ENCODE measurements at regions of chr2 and their contacts with region 1.

Region 1: DNA sequence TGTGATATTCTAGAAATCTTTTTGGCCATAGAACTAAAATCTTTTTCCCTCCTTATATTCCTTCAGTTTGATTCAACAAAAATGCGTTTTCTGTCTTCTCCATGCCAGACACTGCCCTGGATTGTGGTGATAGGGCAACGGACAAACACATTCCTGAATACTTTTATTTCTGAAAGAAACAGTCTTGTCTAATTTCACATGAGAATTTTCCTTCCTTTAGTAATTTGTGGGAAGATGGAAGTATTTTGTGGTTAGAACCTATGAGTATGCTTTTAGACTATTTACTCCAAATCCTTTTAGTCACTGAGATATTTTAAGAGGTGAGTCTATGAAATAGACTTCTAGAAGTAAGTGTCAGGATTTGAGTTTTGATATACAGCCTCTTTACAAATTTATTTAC is 49.6 kb downstream of the COL5A2 start:
- DNase-seq: no peak

Region 2: GRCh38 chr2:189179570-189179950 is 49.6 kb after region 1 on chr2 and contains the start of gene COL5A2:
- intact Hi-C with region 1: loop called in 1 of 2 experiments (anchors 10 kb)
- DNase-seq: peak; percentile 77
- total RNA-seq, gene COL5A2: 61.1 to 123 TPM

Region 3: GRCh38 chr2:189287982-189288521 is 158.1 kb after region 1 on chr2:
- intact Hi-C with region 1: loop called in 1 of 2 experiments (anchors 10 kb)
- DNase-seq: no peak